Naive thymus-derived CD8-positive, alpha-beta T cell (primary cell): ENCODE measurements at regions of chr5 and their contacts with region 1.

Region 1: DNA sequence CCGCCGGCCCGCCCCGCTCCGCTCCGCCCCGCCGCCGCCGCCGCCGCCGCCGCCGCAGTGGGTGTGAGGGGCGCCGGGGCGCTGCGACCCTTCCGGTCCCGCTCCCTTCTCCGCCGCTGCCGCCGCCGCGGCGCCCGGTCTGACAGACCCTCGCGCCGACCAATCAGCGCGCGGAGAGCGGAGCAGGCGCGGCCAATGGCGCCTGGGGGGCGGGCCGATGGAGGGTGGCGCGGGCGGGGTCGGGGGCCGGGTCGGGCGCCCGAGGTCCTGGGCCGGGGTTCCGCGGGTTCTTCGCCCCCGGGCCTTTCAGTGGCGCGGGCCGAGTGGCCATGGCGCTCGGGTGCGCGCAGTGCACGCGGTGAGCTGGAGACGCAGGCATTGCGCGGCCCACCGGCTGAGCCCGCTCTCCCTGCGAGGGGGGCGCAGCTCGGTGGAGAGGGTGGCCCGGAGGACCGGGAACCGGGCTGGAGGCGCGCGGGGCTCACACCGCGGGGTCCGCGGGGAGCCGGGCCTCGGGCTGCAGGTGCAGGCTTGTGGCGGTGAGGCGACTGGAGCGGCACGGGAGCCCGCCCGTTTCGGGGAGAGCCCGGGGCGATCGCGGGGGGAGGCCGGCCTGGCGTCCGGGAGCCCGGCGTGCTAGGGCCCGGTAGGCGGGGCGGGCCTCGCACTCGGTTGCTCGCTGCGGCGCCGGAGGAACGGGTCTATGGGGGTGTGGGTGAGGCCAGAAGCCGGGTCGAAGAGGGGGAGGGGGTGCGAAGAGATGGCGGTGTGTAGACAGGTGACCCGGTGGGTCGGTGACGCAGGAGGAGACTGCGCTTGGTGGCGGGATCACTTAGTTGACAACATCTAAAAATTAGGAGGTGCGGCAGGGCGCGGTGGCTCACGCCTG is at the start of gene MAPK9:
- DNase-seq: peak; percentile 80 to 94 (median 87)
- ATAC-seq: peak; percentile 69 to 74
- H3K4me3 Mint-ChIP-seq: peak within 1 kb of the TSS; percentile 86 to 99 (median 96)
- H3K27ac Mint-ChIP-seq: peak within 1 kb of the TSS; percentile 94 to 100 (median 100)
- H3K4me1 Mint-ChIP-seq: peaks cover 39 to 71% (median 55%) of the 10 kb centered on the region in 4 donors
- H3K27me3 Mint-ChIP-seq: peaks cover 0 to 3% (median 0%) of the 10 kb centered on the region in 5 donors
- polyA plus RNA-seq, gene MAPK9: 20.3 to 28.3 (median 24.0) TPM

Region 2: DNA sequence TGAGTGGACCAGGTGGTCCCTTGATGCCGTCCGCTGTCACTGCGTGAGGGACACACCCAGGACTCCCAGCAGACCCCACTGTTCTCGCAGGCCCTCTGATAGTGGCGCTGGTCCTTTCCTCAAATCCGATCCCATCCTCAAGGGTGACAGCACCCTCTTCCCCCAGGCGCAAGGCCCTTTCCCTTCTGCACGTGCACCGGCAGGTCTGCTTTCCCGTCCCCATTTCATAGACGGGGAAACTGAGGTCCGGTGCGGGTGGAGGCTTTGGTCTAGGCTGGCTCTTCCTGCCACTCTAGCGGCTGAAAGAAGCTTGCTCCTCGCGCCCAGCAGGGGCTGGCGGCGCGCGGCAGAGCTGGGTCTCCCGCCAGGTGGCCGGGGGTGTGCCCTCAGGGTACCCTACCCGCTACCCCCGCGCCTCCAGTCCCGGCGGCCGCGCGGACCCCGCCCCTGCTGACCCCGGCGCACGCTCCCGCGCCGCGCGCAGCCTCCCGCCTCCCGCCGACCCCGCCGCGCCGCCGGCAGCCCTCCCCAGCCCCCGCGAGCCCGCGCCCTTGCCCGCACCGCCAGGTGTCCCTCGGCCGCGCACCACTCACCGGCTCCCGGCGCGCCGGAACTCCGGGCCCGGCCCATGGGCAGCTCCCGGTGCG is 83.6 kb before region 1 on chr5:
- POLR2A ChIA-PET with region 1: no interaction called
- DNase-seq: peak in 1 of 10 donors; percentile 6
- ATAC-seq: peak; percentile 48
- H3K4me3 Mint-ChIP-seq: peak overlapping the region; percentile 44 to 82 (median 68)
- H3K27ac Mint-ChIP-seq: no peak overlapping the region
- H3K4me1 Mint-ChIP-seq: peaks cover 5 to 10% (median 8%) of the 10 kb centered on the region in 4 donors
- H3K27me3 Mint-ChIP-seq: peaks cover 20 to 63% (median 43%) of the 10 kb centered on the region in 5 donors

Region 3: DNA sequence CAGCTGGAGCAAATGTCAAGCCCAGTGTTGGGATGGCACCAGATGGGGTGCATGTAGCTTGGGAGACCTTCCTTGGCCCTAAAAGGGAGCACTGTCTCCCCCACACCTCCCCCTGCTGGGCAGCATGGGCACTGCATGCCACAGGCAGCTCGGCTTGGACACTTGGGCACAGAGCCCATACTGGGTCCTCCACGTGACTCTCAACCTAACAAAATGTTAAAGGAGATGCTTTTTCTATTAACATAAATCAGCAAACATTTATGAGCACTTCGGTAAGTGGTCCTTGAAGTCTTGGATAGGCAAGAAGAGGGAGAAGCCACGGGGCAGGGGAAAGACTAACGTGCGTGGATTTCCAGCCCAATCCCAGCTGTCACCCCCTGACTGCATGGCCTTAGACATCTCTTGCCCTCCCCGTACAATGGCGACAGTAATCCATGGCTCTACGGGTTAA is 23.6 kb after region 1 on chr5:
- POLR2A ChIA-PET with region 1: interaction called, 72 read pairs
- DNase-seq: peak; percentile 56 to 87 (median 71)
- ATAC-seq: peak; percentile 61 to 84
- H3K4me3 Mint-ChIP-seq: peak overlapping the region in 1 of 10 donors; percentile 31
- H3K27ac Mint-ChIP-seq: peak overlapping the region in 2 of 10 donors; percentile 37 to 41
- H3K4me1 Mint-ChIP-seq: peaks cover 0 to 14% (median 2%) of the 10 kb centered on the region in 4 donors
- H3K27me3 Mint-ChIP-seq: peaks cover 0 to 12% (median 4%) of the 10 kb centered on the region in 5 donors